ENCODE measurements at regions of chr6 and their contacts with region 1.

Region 1: DNA sequence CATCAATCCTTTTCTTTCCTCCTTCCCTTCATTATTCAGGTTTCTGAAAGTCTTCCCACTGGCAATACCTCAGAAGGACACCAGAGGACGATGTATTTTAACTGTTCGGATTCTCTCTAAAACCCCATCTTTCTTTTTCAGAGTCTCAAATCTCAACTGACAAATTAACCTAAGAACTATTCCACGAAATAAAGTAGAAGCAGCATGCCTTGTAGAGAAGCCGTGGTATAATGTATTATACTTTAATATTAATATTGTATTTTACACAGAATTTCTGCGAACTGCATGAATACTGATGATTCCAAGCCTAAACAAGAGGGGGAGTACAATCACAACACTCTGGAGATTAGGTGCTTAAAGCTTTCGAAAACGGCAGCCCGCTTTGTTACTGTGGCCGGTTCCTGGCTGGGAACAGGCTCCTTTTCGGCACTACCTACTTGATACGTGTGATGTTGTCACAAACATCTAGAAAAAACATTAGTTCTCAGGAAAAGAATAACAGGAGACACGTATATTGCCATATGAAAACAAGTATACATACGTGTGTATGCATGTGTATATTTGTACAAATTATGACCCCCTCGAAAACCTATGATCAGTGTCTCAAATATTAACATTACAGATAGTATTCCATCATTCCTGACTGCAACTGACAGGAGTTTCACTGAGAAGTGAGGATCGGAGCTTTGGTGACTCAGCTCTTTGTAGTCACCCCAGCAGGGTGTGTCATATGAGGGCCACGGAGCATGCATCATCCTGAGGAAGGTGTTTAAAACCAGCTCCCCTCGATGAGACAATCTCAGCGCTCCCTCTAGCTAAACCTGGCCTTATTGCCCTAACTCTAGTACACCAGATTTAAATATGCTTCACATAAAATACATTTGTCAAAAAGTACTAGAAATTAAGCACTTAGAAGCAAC is 319.7 kb upstream of the TCF21 start:
- DNase-seq: peak; percentile 33
- ATAC-seq: peak; percentile 86 to 95

Region 2: GRCh38 chr6:133916650-133917151 is 347.5 kb after region 1 on chr6:
- intact Hi-C with region 1: loop called in 1 of 2 experiments (anchors 2 kb)
- DNase-seq: peak; percentile 92
- ATAC-seq: peak; percentile 85 to 91

Region 3: GRCh38 chr6:134080171-134080795 is 511.1 kb after region 1 on chr6:
- intact Hi-C with region 1: loop called in 1 of 2 experiments (anchors 10 kb)
- DNase-seq: no peak
- ATAC-seq: no peak

Region 4: DNA sequence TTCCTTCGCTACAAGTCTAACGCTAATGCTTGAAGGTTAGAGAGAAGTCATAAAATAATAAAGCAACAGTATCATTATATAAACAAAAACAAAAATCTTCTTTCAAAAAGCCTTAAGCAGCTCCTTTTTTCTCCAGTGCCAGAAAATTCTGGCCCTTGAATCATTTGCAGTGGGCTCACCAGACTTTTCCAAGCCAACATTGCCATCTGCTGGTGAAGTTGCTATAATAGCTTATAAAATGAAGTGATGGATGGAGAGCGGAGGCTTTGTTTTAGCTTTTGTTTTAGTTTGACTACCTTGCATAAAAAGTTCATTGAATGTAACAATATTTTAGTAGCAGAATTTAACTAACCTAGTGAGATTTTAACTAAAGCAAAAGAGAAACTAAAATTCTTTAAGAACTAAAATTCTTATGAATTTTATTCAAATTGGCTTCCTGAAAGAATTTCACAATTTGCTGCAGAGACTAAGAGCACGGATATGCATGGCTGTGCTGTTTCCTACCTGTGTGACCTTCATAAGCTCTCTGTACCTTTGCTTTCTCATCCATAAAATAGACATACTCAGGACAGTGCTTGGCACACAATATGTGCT is 528.0 kb after region 1 on chr6:
- intact Hi-C with region 1: loop called in 1 of 2 experiments (anchors 5 kb)
- DNase-seq: peak; percentile 63
- ATAC-seq: peak; percentile 44 to 74